Vagina (tissue), 2 donors: ENCODE measurements at regions of chr1 and their contacts with region 1.

Region 1: DNA sequence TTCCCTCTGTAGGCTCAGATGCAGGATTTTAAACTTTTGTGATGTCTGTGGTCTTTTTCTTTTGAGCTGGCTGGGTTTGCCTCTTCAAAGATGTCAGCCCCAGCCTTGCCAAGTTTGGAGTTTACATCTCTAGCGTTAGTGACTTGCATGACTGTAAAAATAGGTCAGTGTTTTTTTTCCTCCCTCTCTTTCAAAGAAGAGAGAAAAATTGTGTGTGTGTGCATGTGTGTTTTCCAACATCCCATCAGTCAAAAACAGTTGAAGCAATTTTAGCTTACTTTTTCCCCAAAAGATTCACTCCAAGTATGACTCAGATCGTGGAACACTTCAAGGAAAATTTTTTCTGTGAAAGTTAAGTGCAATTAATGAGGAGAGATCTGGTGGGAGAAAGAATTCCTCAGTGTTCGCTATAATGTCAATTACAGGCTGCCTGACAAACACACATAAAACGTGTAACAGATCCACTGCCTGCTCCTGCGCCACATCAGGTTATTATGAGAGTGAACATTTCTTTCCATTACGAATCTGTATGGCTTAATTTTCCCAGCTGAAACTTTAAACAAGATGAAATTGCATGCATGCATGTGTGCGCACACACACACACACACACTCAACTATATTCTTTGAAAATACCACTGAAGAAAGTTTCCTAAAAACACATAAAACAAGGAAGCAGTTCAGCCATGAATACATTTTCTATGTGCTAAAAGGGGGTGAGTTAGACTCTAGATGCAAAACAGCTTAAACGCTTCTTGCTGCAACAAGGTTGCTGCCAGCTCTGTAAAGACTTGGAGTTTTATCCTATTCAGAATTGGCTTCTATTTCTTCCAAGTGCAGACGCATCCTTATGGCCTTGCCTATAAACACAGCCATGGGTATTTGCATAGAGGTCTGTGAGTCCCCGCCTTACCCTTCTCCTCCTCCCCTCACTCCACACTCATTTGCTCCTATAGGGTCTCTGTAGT is 55.5 kb downstream of the TLR5 start:
- DNase-seq: no peak
- H3K4me3 ChIP-seq: no peak overlapping the region
- H3K27ac ChIP-seq: peak overlapping the region; percentile 63
- H3K4me1 ChIP-seq: peaks cover 10% of the 10 kb centered on the region
- H3K27me3 ChIP-seq: no peaks in the 10 kb centered on the region
- CTCF ChIP-seq: no peak
- POLR2A ChIP-seq: no peak

Region 2: GRCh38 chr1:221557013-221557412 is 1530.6 kb before region 1 on chr1:
- intact Hi-C with region 1: loop called (anchors 5 kb)
- DNase-seq: no peak
- H3K4me3 ChIP-seq: no peak overlapping the region
- H3K27ac ChIP-seq: no peak overlapping the region
- H3K4me1 ChIP-seq: no peaks in the 10 kb centered on the region
- H3K27me3 ChIP-seq: no peaks in the 10 kb centered on the region
- CTCF ChIP-seq: no peak
- POLR2A ChIP-seq: no peak

Region 3: DNA sequence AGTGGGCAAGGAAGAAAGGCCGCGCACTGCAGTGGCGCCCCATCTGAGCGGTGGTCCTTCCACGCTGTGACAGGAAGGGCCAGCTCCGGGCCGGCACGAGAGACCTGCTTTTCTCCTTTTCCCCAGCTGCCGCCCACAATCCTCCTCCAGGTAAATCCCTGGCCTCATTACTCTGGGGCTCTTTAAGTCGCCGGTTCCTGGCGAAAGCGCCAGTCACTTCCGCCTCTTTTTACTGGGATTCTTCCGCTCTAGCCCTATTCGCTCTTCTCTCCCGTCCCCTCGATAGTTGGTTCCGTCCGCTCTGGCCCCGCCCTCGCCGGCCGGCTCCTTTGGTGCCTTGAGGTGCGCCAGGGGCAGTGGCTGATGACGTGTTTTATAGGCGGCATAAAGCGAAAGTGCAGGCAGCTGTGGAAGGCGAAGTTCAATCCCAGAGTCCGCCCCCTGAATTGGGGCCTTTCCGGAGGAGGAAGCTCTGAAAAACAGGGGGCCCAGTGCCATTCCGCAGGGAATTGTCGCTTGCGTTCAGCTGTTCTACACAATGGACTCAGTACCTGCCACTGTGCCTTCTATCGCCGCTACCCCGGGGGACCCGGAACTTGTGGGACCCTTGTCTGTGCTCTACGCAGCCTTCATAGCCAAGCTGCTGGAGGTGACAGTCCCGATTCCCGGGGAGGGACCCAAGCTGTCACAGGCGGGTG is 443.5 kb before region 1 on chr1:
- intact Hi-C with region 1: no loop called
- DNase-seq: peak; percentile 98
- H3K4me3 ChIP-seq: peak overlapping the region; percentile 92 to 95
- H3K27ac ChIP-seq: peak overlapping the region; percentile 92
- H3K4me1 ChIP-seq: peaks cover 21% of the 10 kb centered on the region
- H3K27me3 ChIP-seq: no peaks in the 10 kb centered on the region
- CTCF ChIP-seq: peak in 1 of 3 experiments; percentile 3
- POLR2A ChIP-seq: peak in 1 of 2 donors; percentile 31

Region 4: DNA sequence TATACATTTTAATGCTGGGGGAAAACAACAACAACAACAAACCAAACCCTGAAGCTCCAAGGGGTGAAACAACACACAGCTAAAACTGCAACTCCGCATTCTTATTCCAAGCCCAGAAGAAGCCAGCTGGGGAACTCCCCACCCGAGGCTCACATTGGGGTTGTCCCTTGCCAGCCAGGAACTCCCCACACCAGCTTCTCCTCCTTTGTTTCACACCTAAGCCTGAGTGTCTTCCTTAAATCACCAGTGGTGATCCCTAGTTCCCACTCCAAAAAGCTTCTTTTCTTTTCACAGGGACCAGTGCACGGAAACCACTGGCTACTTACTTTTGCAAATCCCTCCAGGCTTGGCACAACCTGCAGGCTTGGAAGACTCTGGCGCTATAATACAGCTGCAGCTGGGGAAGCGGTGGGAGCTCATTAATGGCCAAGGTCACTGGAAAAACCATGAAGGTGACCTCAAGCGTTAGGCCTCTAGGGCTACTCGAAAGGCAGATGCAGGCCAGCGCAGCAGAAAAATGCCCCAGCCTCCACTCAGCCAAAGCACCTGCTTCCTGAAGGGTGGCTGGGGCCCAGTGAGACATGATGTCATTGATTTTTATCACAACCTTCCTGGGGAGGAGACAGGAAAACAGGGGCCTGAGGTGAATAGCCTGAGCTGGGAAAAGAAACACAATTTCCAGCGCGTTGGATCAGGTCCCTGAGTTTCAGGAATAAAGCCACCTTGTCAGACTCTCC is 15.4 kb after region 1 on chr1:
- intact Hi-C with region 1: no loop called
- DNase-seq: no peak
- H3K4me3 ChIP-seq: peak overlapping the region in 1 of 2 donors; percentile 2
- H3K27ac ChIP-seq: no peak overlapping the region
- H3K4me1 ChIP-seq: no peaks in the 10 kb centered on the region
- H3K27me3 ChIP-seq: no peaks in the 10 kb centered on the region
- CTCF ChIP-seq: no peak
- POLR2A ChIP-seq: no peak

Region 5: GRCh38 chr1:223411309-223411708 is 323.7 kb after region 1 on chr1:
- intact Hi-C with region 1: no loop called
- DNase-seq: no peak
- H3K4me3 ChIP-seq: no peak overlapping the region
- H3K27ac ChIP-seq: no peak overlapping the region
- H3K4me1 ChIP-seq: no peaks in the 10 kb centered on the region
- H3K27me3 ChIP-seq: no peaks in the 10 kb centered on the region
- CTCF ChIP-seq: no peak
- POLR2A ChIP-seq: no peak